ENCODE measurements at regions of chr9 and their contacts with region 1.

Region 1: GRCh38 chr9:13804532-13804931 is 509.4 kb downstream of the NFIB start:
- DNase-seq: peak; percentile 87
- ATAC-seq: peak; percentile 91
- H3K4me3 ChIP-seq: no peak overlapping the region
- H3K27ac ChIP-seq: peak overlapping the region; percentile 68
- H3K4me1 ChIP-seq: peaks cover 28% of the 10 kb centered on the region
- H3K27me3 ChIP-seq: no peaks in the 10 kb centered on the region
- CTCF ChIP-seq: no peak

Region 2: GRCh38 chr9:13607481-13608441 is 196.8 kb before region 1 on chr9:
- CTCF ChIA-PET with region 1: no interaction called
- POLR2A ChIA-PET with region 1: no interaction called
- intact Hi-C with region 1: no loop called
- DNase-seq: no peak
- ATAC-seq: no peak
- H3K4me3 ChIP-seq: no peak overlapping the region
- H3K27ac ChIP-seq: no peak overlapping the region
- H3K4me1 ChIP-seq: no peaks in the 10 kb centered on the region
- H3K27me3 ChIP-seq: no peaks in the 10 kb centered on the region
- CTCF ChIP-seq: no peak

Region 3: GRCh38 chr9:13707612-13708576 is 96.6 kb before region 1 on chr9:
- CTCF ChIA-PET with region 1: no interaction called
- POLR2A ChIA-PET with region 1: no interaction called
- intact Hi-C with region 1: loop called (anchors 1 kb)
- DNase-seq: peak; percentile 91
- ATAC-seq: peak; percentile 95
- H3K4me3 ChIP-seq: peak overlapping the region; percentile 41
- H3K27ac ChIP-seq: peak overlapping the region; percentile 99
- H3K4me1 ChIP-seq: peaks cover 25% of the 10 kb centered on the region
- H3K27me3 ChIP-seq: no peaks in the 10 kb centered on the region
- CTCF ChIP-seq: no peak

Measured in PC-3 (cell line).